HEK293T (cell line): ENCODE measurements at regions of chr16 and their contacts with region 1.

Region 1: GRCh38 chr16:85491058-85491771 is 121.9 kb upstream of the GSE1 start:
- DNase-seq: peak; percentile 70

Region 2: GRCh38 chr16:85479972-85480751 is 11.1 kb before region 1 on chr16:
- CTCF ChIA-PET with region 1: interaction called, 10 read pairs
- POLR2A ChIA-PET with region 1: no interaction called
- DNase-seq: peak; percentile 87

Region 3: DNA sequence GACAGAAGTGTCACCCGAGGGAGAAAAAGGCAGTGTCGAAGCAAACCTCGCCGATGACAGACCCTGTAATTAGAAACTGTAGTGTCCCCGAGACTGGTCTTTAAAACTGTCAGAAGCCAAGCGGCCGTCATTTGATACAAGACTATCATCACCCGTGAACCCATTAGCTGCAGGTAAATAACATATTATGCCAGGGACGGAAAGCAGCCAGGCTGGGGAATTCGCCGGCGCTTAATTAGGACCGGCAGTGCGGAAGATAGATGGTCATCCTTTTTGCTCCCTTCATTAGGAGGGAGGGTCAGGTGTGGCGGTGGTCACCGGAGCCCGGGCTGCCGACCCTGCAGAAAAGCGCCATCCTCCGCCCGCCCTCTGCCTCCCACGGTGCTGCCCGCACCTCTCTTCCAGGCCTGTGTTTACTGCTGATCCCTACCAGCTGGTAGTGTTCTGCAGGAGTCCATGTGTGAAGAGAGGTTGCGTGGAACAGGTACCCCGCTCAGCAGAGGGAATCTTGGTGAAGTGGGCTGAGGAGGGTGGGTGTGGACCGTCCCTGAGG is 12.5 kb after region 1 on chr16:
- CTCF ChIA-PET with region 1: interaction called, 11 read pairs
- POLR2A ChIA-PET with region 1: no interaction called
- DNase-seq: no peak

Region 4: DNA sequence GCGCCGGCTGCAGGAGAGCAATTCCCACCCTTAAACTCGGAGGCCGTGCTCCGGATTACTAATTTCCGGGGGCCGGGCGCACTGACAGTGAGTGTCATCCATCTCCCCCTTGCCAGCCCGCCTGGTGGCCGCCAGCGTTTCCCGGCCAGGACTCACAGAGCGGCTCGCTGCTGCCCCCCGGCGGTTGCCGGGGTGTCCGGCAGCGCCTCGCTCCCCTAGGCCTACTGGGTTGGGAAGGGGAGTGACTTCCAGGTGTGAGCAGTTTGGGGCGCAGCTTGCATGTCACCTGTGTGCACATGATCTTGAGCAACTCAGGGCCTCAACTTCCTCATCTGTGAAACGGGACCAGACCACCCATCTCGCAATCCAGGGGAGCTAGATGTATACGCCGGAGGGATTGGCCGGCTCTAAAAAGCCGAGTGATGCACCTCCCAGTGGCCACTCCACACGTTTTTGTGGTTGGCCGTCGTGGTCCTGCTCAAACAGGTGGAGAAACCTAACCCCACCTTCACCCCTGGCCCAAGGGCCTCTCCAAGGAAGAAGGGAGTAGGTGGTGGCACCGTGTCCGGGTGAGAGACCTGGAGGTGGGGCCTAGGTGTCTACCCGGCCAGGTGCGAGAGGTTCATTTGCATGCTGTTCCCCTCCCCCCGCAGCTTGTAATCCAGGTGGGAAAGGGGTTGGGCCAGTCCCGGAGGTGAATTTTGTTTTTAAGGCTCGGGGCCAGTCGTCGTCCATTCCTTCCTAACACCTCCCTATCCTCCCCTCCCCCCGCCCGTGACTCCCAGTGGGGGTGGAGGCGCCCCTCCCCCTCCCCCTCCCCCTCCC is 119.5 kb after region 1 on chr16:
- CTCF ChIA-PET with region 1: interaction called, 14 read pairs
- POLR2A ChIA-PET with region 1: no interaction called
- DNase-seq: peak; percentile 83